Dendritic cell treated with granulocyte-macrophage colony-stimulating factor and Interleukin-4, amounts not matched to agents 40 ng/mL and 50 ng/mL, for 4 days (primary cell): ENCODE measurements at regions of chr9 and their contacts with region 1.

Region 1: DNA sequence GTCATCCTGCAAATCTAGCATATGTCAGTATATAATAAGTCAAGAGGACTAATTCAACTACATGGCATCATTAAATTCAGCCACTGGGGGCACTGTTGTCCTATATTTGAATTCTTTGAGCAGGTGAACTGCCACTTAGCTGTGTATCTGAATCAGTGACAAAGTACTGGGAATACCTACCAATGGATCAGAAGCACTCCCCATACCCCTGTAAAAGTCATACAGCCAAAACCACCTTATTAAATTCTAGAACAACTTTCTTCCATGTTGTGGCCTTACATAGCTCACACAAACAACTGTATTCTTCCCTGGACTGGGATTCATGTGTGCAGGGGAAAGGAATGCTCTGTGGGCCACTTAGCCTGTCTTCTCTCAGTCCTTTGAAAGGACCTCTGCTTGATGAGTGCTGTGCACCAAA is 57.4 kb upstream of the PLPP6 start:
- H3K4me3 Mint-ChIP-seq: no peak overlapping the region
- H3K27ac Mint-ChIP-seq: no peak overlapping the region
- H3K4me1 Mint-ChIP-seq: peaks cover 8% of the 10 kb centered on the region
- H3K27me3 Mint-ChIP-seq: peaks cover 17% of the 10 kb centered on the region

Region 2: DNA sequence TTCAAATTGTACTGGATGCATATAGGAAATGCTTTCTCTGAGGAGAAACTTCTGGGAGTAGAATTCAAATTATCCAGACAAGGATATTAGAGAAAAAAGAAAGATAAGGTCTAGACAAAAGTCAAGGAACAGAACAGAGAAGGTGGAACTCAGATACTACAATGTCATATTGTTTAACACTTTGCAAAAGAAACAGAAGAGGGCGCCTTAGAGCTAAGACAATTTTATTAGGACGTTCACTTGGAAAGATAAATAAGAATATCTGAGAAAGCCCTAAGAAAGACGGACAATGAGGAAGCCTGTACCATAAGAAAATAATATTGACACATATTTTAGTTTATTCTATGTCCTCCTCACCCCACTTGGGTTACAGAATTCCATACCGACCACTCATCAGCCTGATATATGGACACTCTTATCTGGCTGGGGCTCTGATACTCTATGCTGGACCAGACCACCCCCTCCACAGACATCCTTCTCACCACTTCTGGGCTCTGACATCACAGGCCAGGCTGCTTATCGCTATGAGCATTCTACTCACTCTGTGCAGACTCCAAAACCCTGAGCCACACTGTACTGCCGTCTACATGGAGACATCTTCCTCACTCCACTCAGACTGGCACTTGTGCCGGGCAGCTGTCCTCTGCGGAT is 145.5 kb after region 1 on chr9:
- intact Hi-C with region 1: loop called (anchors 5 kb)
- H3K4me3 Mint-ChIP-seq: no peak overlapping the region
- H3K27ac Mint-ChIP-seq: no peak overlapping the region
- H3K4me1 Mint-ChIP-seq: peaks cover 8% of the 10 kb centered on the region
- H3K27me3 Mint-ChIP-seq: peaks cover 4% of the 10 kb centered on the region